Heart right ventricle (tissue), 16 donors: ENCODE measurements at regions of chrX and their contacts with region 1.

Region 1: DNA sequence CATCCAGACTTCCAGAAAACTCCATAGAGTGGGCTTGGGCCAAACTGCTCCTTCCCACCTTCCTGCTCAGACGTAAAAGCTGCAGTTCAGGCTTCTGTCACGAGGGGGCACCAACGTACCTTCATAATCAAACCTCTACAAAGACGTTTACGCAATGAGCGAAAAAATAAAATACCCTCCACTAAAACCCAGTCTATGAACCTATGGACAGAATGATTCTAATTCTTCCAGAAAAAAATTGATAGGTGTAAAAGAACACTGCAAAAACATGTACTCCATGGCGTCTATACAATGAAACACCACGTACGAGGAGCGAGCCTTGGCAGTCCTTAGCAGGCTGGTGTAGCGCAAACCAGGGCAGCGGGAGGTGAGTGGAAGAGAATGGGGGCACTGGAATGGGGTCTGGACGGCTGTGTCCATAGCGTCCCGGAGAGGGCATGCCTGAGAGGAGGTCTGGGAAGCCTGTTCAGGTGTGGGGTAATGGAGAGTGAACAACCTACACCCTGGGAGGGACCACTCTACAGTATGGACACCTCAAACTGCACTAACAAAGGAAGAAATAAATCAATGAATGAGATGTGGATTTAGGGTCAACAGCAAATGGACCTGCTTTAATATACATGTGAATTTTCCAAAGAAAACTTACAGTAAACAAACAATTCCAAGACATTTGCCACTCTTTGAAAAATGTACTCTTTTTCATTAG is 14.4 kb upstream of the RAB40A start:
- DNase-seq: peak; percentile 56 to 67
- ATAC-seq: peak; percentile 71 to 81 (median 75)
- H3K4me3 ChIP-seq: peak overlapping the region in 9 of 10 donors; percentile 5 to 57 (median 49)
- H3K27ac ChIP-seq: no peak overlapping the region
- H3K4me1 ChIP-seq: no peaks in the 10 kb centered on the region
- H3K27me3 ChIP-seq: peaks cover 0 to 20% (median 0%) of the 10 kb centered on the region in 7 donors
- CTCF ChIP-seq: peak; percentile 54 to 87 (median 74)

Region 2: GRCh38 chrX:103356130-103356798 is 177.4 kb before region 1 on chrX and contains the start of gene TCEAL9:
- intact Hi-C with region 1: no loop called
- DNase-seq: peak; percentile 28 to 78
- ATAC-seq: peak; percentile 85 to 98 (median 97)
- H3K4me3 ChIP-seq: peak within 1 kb of the TSS; percentile 51 to 84 (median 72)
- H3K27ac ChIP-seq: peak within 1 kb of the TSS; percentile 70 to 92 (median 86)
- H3K4me1 ChIP-seq: peaks cover 0 to 10% (median 0%) of the 10 kb centered on the region in 9 donors
- H3K27me3 ChIP-seq: peaks cover 0 to 30% (median 0%) of the 10 kb centered on the region in 7 donors
- CTCF ChIP-seq: no peak
- total RNA-seq, gene TCEAL9: 14.8 to 46.0 (median 23.1) TPM

Region 3: DNA sequence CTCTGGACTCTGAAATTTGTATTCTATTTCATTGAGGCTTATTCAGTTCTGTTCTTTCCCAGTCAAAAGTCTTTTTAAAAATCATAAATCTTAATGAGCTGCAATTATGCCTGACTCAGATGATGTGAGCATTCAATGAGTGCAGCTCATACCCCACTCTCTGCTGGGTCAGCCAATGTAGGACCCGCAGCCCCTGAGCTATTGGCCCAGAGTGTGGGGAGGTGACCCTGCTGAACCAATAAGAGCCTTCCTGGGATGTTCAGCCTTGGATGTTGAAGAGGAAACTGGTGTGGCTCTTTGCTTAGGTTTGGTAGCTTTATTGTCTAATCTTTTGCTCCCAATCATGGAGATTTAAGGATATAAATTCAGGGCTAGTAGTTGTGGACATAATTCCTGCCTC is 39.5 kb after region 1 on chrX:
- intact Hi-C with region 1: no loop called
- DNase-seq: no peak
- ATAC-seq: no peak
- H3K4me3 ChIP-seq: no peak overlapping the region
- H3K27ac ChIP-seq: no peak overlapping the region
- H3K4me1 ChIP-seq: no peaks in the 10 kb centered on the region
- H3K27me3 ChIP-seq: peaks cover 0 to 36% (median 0%) of the 10 kb centered on the region in 7 donors
- CTCF ChIP-seq: no peak

Region 4: GRCh38 chrX:103629318-103630170 is 95.9 kb after region 1 on chrX:
- intact Hi-C with region 1: loop called in 2 of 10 experiments (anchors 5 to 10 kb)
- DNase-seq: peak; percentile 65 to 67
- ATAC-seq: peak; percentile 90 to 97 (median 96)
- H3K4me3 ChIP-seq: peak overlapping the region; percentile 61 to 79 (median 72)
- H3K27ac ChIP-seq: peak overlapping the region; percentile 69 to 95 (median 92)
- H3K4me1 ChIP-seq: peaks cover 0 to 23% (median 7%) of the 10 kb centered on the region in 9 donors
- H3K27me3 ChIP-seq: peaks cover 0 to 25% (median 0%) of the 10 kb centered on the region in 7 donors
- CTCF ChIP-seq: peak in 8 of 9 donors; percentile 11 to 70 (median 48)

Region 5: DNA sequence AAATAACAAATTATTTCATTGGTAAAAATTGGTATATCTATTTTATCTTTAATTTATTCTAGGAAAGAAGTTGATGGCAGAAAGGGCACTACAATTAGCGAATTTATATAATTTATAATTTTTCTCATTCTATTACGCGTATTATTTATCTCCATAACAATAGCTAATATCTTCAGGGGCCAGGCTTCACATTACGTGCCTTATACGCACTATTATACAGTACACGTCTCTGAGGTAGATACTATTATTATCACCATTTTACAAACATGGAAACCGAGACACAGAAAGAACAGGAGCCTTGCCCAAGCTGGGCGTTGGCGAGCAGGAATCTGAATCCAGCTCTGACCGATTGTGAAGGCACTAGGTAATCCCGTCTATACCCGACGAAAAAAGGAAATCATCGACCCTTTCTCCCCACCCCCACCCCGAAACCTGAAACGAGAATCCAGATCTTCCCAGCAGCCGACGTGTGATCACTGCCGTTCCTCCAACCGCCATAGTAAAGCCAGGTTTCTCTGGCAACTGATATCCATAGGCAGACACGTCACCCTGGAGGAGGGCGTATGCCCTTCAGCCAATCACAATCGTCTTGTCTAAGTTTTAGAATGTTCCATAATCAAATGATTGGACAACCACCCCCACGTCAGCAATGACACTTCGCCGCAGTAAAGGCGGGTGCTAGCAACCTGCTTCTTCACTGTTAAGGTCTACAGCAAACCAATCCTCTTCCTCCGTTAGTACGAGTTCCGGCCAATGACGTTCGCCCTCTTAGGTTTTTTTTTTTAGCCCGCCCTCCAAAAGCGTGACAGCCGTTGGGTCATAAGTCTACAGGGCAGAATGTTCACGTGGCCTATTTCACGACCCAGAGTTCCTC is 152.8 kb after region 1 on chrX and contains the start of gene MORF4L2:
- intact Hi-C with region 1: loop called in 3 of 10 experiments (anchors 5 to 10 kb)
- DNase-seq: peak; percentile 78 to 94
- ATAC-seq: peak; percentile 88 to 96 (median 92)
- H3K4me3 ChIP-seq: peak within 1 kb of the TSS; percentile 44 to 77 (median 65)
- H3K27ac ChIP-seq: peak within 1 kb of the TSS; percentile 76 to 99 (median 95)
- H3K4me1 ChIP-seq: peaks cover 0 to 43% (median 14%) of the 10 kb centered on the region in 9 donors
- H3K27me3 ChIP-seq: peaks cover 0 to 20% (median 0%) of the 10 kb centered on the region in 7 donors
- CTCF ChIP-seq: no peak
- total RNA-seq, gene MORF4L2: 149 to 244 (median 191) TPM

Region 6: DNA sequence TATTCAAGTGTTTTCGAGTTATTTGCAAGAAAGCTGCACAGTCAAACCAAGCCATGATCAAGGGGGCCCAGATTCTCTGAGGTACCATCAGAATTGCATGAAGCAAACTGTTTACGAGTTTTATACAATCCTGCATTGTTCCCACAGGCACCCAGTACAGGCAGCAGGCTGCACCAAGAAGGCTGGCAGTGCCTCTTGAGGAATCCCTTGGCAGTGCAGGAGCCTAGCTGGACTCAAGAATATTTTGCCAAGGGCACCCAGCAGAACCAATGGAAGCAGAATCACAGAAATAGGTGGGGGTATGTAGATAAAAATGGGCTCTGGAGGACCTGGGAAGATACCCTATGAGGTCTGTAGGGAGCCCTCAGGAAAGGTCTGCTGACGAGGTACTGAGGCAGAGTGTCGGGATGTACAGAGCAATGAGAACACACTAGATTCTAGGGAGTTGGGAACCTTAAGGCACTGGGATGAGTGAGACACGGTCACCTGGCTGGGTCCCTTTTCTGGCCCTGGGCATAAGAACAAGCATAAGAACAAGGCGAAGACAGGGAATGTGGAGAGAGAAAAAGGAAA is 240.5 kb after region 1 on chrX:
- intact Hi-C with region 1: loop called in 1 of 10 experiments (anchors 10 kb)
- DNase-seq: no peak
- ATAC-seq: peak in 3 of 8 donors; percentile 56 to 61 (median 59)
- H3K4me3 ChIP-seq: no peak overlapping the region
- H3K27ac ChIP-seq: no peak overlapping the region
- H3K4me1 ChIP-seq: no peaks in the 10 kb centered on the region
- H3K27me3 ChIP-seq: peaks cover 0 to 11% (median 0%) of the 10 kb centered on the region in 7 donors
- CTCF ChIP-seq: peak in 7 of 9 donors; percentile 29 to 49 (median 43)

Region 7: DNA sequence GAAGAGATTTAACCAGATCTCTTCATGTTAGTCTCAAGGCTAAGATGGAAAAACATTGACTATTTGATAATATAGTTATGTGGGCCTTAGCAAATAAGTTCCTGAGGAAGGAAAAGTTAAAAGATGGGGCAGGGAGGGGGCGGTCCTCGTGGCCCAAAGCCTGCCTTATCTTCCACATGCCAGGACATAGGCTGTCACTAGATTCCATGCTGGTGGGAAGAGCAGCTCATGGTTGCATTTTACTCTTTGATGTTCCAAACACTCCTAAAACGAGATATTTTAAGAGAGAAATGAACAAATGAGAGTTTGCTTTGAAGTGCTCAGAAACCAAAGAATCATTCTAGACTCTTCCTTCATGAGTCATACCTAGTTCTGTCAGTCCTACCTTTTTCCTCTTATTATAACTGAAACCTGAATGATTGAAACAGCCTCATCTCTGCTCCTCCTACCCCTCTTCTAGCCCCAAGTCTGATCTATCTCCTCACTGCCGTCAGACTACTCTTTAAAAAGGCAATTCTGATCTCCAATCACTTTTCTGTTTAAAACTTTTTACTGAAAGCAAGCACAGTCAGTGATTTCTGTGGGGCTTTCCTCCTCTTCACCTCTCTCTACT is 273.3 kb after region 1 on chrX:
- intact Hi-C with region 1: no loop called
- DNase-seq: no peak
- ATAC-seq: no peak
- H3K4me3 ChIP-seq: no peak overlapping the region
- H3K27ac ChIP-seq: no peak overlapping the region
- H3K4me1 ChIP-seq: no peaks in the 10 kb centered on the region
- H3K27me3 ChIP-seq: peaks cover 0 to 50% (median 0%) of the 10 kb centered on the region in 7 donors
- CTCF ChIP-seq: no peak

Region 8: DNA sequence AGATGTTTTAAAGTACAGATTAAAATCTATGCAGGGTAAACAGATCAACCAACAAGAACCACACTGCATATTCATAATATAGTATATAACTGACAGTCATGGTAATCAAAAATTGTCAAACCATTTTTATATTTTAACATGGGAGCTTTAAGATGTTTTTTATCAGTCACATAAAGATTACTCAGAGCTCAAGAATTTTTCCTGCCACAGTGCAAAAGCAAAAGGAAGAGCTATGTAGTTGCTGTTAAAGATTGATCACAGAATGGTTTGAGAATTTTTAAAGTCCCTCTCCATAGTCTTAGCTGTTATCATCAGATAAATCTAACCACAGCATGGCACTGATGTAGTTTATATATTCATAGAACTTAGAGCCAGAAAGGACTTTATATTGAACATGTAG is 289.9 kb after region 1 on chrX:
- intact Hi-C with region 1: loop called in 8 of 10 experiments (anchors 2 to 10 kb)
- DNase-seq: no peak
- ATAC-seq: no peak
- H3K4me3 ChIP-seq: no peak overlapping the region
- H3K27ac ChIP-seq: no peak overlapping the region
- H3K4me1 ChIP-seq: peaks cover 0 to 5% (median 0%) of the 10 kb centered on the region in 9 donors
- H3K27me3 ChIP-seq: peaks cover 0 to 53% (median 0%) of the 10 kb centered on the region in 7 donors
- CTCF ChIP-seq: no peak